Gastrocnemius medialis (tissue), 4 donors: ENCODE measurements at regions of chr10 and their contacts with region 1.

Region 1: GRCh38 chr10:76126607-76127527 is 695.4 kb downstream of the LRMDA start:
- DNase-seq: no peak
- ATAC-seq: no peak
- H3K4me3 ChIP-seq: no peak overlapping the region
- H3K27ac ChIP-seq: no peak overlapping the region
- H3K4me1 ChIP-seq: no peaks in the 10 kb centered on the region
- H3K27me3 ChIP-seq: peaks cover 0 to 2% (median under 1%) of the 10 kb centered on the region in 3 donors
- CTCF ChIP-seq: no peak
- POLR2A ChIP-seq: no peak

Region 2: DNA sequence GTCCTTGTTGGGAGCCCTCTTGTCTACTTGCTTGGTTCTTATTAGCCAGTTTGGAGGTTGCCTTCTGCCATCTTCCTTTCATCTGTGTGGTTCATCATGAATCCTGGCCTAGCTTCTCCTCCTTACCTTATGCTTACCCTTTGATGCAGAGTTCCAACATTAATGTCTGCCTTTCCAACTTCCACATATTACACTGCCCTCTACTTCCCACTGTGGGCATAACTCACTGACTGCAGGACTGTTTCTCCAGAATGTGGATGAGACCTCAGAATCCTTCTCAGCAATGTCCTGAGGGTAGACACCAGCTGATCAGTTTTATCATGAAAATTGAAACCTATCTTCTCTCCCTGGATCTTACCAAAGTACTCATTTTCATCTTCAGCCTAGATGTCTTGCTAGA is 204.4 kb before region 1 on chr10:
- in situ Hi-C with region 1: no loop called
- intact Hi-C with region 1: loop called (anchors 10 kb)
- DNase-seq: no peak
- ATAC-seq: no peak
- H3K4me3 ChIP-seq: no peak overlapping the region
- H3K27ac ChIP-seq: no peak overlapping the region
- H3K4me1 ChIP-seq: no peaks in the 10 kb centered on the region
- H3K27me3 ChIP-seq: peaks cover 0 to 3% (median 0%) of the 10 kb centered on the region in 3 donors
- CTCF ChIP-seq: no peak
- POLR2A ChIP-seq: no peak